CD8-positive, alpha-beta T cell (primary cell): ENCODE measurements at regions of chr9 and their contacts with region 1.

Region 1: DNA sequence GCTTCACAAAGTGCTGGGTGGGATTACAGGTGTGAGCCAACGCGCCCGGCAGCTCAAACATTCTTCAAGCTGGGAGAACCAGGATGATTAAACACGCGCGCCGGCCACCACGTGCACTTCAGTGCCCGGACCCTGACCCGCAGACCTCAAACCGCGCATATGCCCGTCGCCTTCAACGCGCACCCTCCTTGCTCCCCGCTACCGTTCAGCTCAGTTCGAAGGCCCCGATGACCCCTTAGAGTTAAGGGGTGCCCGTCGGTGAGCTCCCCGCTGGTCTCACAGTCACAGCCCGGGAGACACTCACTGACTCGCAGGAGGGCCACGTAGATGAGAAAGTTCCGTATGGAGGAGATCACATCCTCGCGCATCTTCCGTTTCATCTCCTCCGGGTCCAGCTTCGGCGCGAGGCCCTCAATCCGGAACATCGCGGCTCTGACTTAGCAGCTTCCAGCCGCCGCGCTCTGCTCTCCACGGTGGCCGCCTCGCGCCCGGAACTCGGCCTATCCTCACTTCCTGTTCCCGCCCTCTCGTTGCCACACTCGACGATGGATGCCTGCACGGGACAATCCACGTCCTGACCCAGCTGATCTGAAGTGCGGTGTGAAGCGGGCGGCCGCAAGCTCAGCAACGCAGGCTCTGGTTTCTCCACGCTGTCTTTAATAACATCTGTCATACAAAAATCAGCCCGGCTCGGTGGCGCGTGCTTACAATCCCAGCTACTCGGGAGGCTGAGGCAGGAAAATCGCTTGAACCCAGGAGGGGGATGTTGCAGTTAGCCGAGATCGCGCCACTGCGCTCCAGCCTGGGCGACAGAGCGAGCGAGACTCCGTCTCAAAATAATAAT is at the start of gene TOMM5:
- DNase-seq: peak; percentile 73 to 96 (median 91)
- ATAC-seq: peak; percentile 95
- H3K4me3 ChIP-seq: peak within 1 kb of the TSS; percentile 96 to 98
- H3K4me3 Mint-ChIP-seq: peak within 1 kb of the TSS; percentile 99
- H3K27ac ChIP-seq: peak within 1 kb of the TSS; percentile 79 to 80
- H3K27ac Mint-ChIP-seq: peak within 1 kb of the TSS; percentile 93
- H3K4me1 ChIP-seq: peaks cover 18% of the 10 kb centered on the region
- H3K4me1 Mint-ChIP-seq: peaks cover 48% of the 10 kb centered on the region
- H3K27me3 ChIP-seq: no peaks in the 10 kb centered on the region
- H3K27me3 Mint-ChIP-seq: peaks cover 4% of the 10 kb centered on the region
- CTCF ChIP-seq: no peak
- total RNA-seq, gene TOMM5: 37.8 to 40.1 TPM

Region 2: DNA sequence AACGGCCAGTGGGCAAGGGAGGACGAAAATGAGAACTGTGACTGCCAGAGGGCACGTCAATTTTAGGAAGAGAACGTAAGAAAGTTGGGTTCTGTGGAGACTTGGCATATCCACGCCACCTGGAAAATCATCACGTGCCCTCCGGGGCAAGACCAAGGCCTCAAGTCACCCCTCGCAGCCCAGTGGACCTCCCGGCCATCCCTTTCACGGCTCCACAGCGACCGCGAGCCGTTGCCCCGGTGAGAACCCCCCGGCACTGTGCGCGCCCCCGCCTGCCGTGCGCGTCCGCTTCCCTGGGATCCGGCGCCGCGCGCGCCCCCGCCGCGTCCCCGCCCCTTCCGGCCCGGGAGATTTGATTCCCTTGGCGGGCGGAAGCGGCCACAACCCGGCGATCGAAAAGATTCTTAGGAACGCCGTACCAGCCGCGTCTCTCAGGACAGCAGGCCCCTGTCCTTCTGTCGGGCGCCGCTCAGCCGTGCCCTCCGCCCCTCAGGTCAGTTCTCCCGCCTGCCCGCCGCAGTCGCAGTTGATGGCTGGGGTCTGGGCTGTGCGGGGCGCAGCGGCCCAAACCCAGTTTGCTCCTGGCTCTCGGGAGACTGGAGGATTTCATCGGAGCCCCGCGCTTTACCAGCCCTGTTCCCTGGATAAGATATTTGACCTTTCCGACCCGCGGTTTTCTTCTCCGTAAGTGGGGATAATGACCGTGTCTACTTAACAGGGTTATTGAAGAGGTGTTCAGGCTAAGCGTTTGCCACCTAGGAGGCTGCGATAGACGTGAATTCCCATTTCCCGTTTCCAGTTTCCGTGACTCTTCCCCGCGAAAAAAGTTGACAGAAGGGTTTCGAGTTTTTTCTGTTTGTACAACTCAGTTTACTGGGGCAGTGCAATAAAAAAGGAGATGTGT is 1019.6 kb before region 1 on chr9 and contains the start of gene MELK:
- CTCF ChIA-PET with region 1: no interaction called
- POLR2A ChIA-PET with region 1: no interaction called
- intact Hi-C with region 1: loop called in 1 of 2 experiments (anchors 5 kb)
- DNase-seq: peak; percentile 69 to 91 (median 82)
- ATAC-seq: peak; percentile 83
- H3K4me3 ChIP-seq: peak within 1 kb of the TSS; percentile 70
- H3K4me3 Mint-ChIP-seq: peak within 1 kb of the TSS; percentile 87
- H3K27ac ChIP-seq: peak within 1 kb of the TSS; percentile 63 to 72
- H3K27ac Mint-ChIP-seq: peak within 1 kb of the TSS; percentile 55
- H3K4me1 ChIP-seq: peaks cover 10% of the 10 kb centered on the region
- H3K4me1 Mint-ChIP-seq: peaks cover 9% of the 10 kb centered on the region
- H3K27me3 ChIP-seq: no peaks in the 10 kb centered on the region
- H3K27me3 Mint-ChIP-seq: peaks cover 3% of the 10 kb centered on the region
- CTCF ChIP-seq: no peak
- total RNA-seq, gene MELK: 0.24 TPM in 1 of 2 experiments, not detected in the other

Region 3: GRCh38 chr9:37119907-37120842 is 472.2 kb before region 1 on chr9 and contains the start of gene ZCCHC7:
- CTCF ChIA-PET with region 1: no interaction called
- POLR2A ChIA-PET with region 1: interaction called, 3 read pairs
- intact Hi-C with region 1: loop called in 1 of 2 experiments (anchors 2 kb)
- DNase-seq: peak; percentile 95 to 98 (median 97)
- ATAC-seq: peak; percentile 94
- H3K4me3 ChIP-seq: peak within 1 kb of the TSS; percentile 66 to 77
- H3K4me3 Mint-ChIP-seq: peak within 1 kb of the TSS; percentile 97
- H3K27ac ChIP-seq: peak within 1 kb of the TSS; percentile 89 to 97
- H3K27ac Mint-ChIP-seq: peak within 1 kb of the TSS; percentile 98
- H3K4me1 ChIP-seq: peaks cover 23% of the 10 kb centered on the region
- H3K4me1 Mint-ChIP-seq: peaks cover 41% of the 10 kb centered on the region
- H3K27me3 ChIP-seq: no peaks in the 10 kb centered on the region
- H3K27me3 Mint-ChIP-seq: no peaks in the 10 kb centered on the region
- CTCF ChIP-seq: no peak
- total RNA-seq, gene ZCCHC7: 35.2 to 39.5 TPM

Region 4: GRCh38 chr9:37465249-37466036 is 126.9 kb before region 1 on chr9 and contains the start of gene ZBTB5:
- CTCF ChIA-PET with region 1: no interaction called
- POLR2A ChIA-PET with region 1: no interaction called
- intact Hi-C with region 1: loop called (anchors 1 to 5 kb)
- DNase-seq: peak; percentile 97 to 100 (median 99)
- ATAC-seq: peak; percentile 79
- H3K4me3 ChIP-seq: peak within 1 kb of the TSS; percentile 91 to 97
- H3K4me3 Mint-ChIP-seq: peak within 1 kb of the TSS; percentile 95
- H3K27ac ChIP-seq: peak within 1 kb of the TSS; percentile 86 to 97
- H3K27ac Mint-ChIP-seq: peak within 1 kb of the TSS; percentile 98
- H3K4me1 ChIP-seq: peaks cover 23% of the 10 kb centered on the region
- H3K4me1 Mint-ChIP-seq: peaks cover 40% of the 10 kb centered on the region
- H3K27me3 ChIP-seq: no peaks in the 10 kb centered on the region
- H3K27me3 Mint-ChIP-seq: no peaks in the 10 kb centered on the region
- CTCF ChIP-seq: no peak
- total RNA-seq, gene ZBTB5: 18.5 to 18.7 TPM

Region 5: DNA sequence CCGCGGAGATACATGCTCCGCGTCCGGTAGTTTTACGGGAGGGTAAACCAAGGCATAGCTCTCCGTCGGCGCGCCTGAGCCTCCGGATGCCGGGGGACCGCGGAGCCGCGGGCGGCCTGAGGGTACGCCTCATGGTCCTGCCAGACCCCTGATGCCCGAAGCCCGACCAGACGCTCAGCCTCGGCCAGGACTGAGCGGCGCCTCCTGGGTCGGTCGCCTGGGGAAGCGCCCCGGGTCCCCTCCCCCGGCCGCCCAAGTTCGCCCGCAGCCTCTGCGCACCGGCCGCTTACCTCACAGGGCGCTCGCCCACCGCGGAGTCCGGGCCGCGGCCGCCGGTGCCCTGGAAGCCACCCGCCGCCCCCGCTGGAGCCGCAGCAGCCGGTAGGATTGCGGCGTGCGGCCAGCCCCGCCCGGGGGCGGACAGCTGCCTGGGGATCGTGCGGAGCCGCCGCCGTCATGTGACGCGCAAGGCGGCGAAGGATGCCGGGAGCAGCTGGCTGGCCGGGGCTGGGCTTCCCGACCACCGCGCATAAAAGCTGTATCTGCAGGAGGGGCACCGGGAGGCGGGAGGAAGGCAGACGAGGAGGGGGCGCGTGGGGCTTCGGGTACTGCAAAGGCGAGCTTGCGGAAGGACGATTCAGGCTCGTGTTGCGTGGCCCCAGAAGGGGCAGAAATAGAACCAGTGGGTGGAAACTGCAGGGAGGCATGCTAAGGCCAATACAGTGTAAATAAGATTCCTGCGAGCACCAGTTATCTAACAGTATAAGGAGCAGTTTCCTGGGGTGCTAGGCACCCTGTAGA is 16.2 kb before region 1 on chr9 and contains the start of gene FBXO10:
- CTCF ChIA-PET with region 1: interaction called, 4 read pairs
- POLR2A ChIA-PET with region 1: interaction called, 10 read pairs
- intact Hi-C with region 1: no loop called
- DNase-seq: peak in 8 of 9 experiments; percentile 7 to 61 (median 40)
- ATAC-seq: peak; percentile 69
- H3K4me3 ChIP-seq: peak within 1 kb of the TSS; percentile 51 to 58
- H3K4me3 Mint-ChIP-seq: peak within 1 kb of the TSS; percentile 94
- H3K27ac ChIP-seq: peak within 1 kb of the TSS in 1 of 2 experiments; percentile 13
- H3K27ac Mint-ChIP-seq: peak within 1 kb of the TSS; percentile 77
- H3K4me1 ChIP-seq: peaks cover 7% of the 10 kb centered on the region
- H3K4me1 Mint-ChIP-seq: peaks cover 19% of the 10 kb centered on the region
- H3K27me3 ChIP-seq: no peaks in the 10 kb centered on the region
- H3K27me3 Mint-ChIP-seq: no peaks in the 10 kb centered on the region
- CTCF ChIP-seq: no peak
- total RNA-seq, gene FBXO10: 0.39 to 0.62 TPM

Region 6: GRCh38 chr9:37640246-37640645 is 47.9 kb after region 1 on chr9:
- CTCF ChIA-PET with region 1: no interaction called
- POLR2A ChIA-PET with region 1: no interaction called
- intact Hi-C with region 1: no loop called
- DNase-seq: no peak
- ATAC-seq: no peak
- H3K4me3 ChIP-seq: no peak overlapping the region
- H3K4me3 Mint-ChIP-seq: no peak overlapping the region
- H3K27ac ChIP-seq: no peak overlapping the region
- H3K27ac Mint-ChIP-seq: no peak overlapping the region
- H3K4me1 ChIP-seq: no peaks in the 10 kb centered on the region
- H3K4me1 Mint-ChIP-seq: no peaks in the 10 kb centered on the region
- H3K27me3 ChIP-seq: no peaks in the 10 kb centered on the region
- H3K27me3 Mint-ChIP-seq: peaks cover 8% of the 10 kb centered on the region
- CTCF ChIP-seq: no peak

Region 7: GRCh38 chr9:37903647-37904444 is 311.5 kb after region 1 on chr9 and contains the start of gene SLC25A51:
- CTCF ChIA-PET with region 1: no interaction called
- POLR2A ChIA-PET with region 1: no interaction called
- intact Hi-C with region 1: loop called (anchors 5 kb)
- DNase-seq: peak; percentile 94 to 99 (median 96)
- ATAC-seq: peak; percentile 87
- H3K4me3 ChIP-seq: peak within 1 kb of the TSS; percentile 65 to 89
- H3K4me3 Mint-ChIP-seq: peak within 1 kb of the TSS; percentile 91
- H3K27ac ChIP-seq: peak within 1 kb of the TSS; percentile 62 to 73
- H3K27ac Mint-ChIP-seq: peak within 1 kb of the TSS; percentile 94
- H3K4me1 ChIP-seq: peaks cover 22% of the 10 kb centered on the region
- H3K4me1 Mint-ChIP-seq: peaks cover 30% of the 10 kb centered on the region
- H3K27me3 ChIP-seq: no peaks in the 10 kb centered on the region
- H3K27me3 Mint-ChIP-seq: no peaks in the 10 kb centered on the region
- CTCF ChIP-seq: peak; percentile 86
- total RNA-seq, gene SLC25A51: 14.7 to 15.2 TPM

Region 8: DNA sequence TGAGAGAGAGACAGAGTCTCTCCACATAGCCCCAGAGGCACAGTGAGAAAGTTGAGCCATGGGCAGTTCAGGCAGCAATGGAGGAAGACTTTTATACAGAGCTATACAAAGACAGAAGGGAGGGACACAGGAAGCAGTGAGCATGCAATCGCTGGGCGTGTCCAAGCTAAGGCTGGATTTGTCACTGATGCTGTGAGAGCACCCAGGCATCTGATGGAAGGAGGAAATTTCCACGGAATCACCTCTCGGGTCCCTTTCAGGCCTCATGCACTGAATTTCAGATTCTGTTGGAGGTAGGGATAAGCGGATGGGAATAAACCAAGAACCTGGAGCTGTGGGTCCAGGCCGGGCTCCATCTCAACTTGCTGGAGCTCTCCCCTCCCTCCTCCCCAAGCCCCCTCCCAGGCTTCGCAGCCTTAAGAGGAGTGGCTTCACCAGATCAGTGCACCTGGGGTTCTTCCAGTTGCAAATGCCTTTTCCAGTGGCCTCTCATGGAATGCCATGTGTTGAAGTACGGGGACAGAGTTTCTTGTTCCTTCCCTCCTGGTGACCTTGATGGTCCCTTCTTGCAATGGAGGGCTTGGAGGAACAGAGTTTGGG is 685.4 kb after region 1 on chr9:
- CTCF ChIA-PET with region 1: no interaction called
- POLR2A ChIA-PET with region 1: no interaction called
- intact Hi-C with region 1: no loop called
- DNase-seq: peak in 1 of 9 experiments; percentile 45
- ATAC-seq: no peak
- H3K4me3 ChIP-seq: no peak overlapping the region
- H3K4me3 Mint-ChIP-seq: no peak overlapping the region
- H3K27ac ChIP-seq: no peak overlapping the region
- H3K27ac Mint-ChIP-seq: no peak overlapping the region
- H3K4me1 ChIP-seq: peaks cover 5% of the 10 kb centered on the region
- H3K4me1 Mint-ChIP-seq: peaks cover 10% of the 10 kb centered on the region
- H3K27me3 ChIP-seq: no peaks in the 10 kb centered on the region
- H3K27me3 Mint-ChIP-seq: no peaks in the 10 kb centered on the region
- CTCF ChIP-seq: no peak